ENCODE measurements at regions of chr1 and their contacts with region 1.

Region 1: DNA sequence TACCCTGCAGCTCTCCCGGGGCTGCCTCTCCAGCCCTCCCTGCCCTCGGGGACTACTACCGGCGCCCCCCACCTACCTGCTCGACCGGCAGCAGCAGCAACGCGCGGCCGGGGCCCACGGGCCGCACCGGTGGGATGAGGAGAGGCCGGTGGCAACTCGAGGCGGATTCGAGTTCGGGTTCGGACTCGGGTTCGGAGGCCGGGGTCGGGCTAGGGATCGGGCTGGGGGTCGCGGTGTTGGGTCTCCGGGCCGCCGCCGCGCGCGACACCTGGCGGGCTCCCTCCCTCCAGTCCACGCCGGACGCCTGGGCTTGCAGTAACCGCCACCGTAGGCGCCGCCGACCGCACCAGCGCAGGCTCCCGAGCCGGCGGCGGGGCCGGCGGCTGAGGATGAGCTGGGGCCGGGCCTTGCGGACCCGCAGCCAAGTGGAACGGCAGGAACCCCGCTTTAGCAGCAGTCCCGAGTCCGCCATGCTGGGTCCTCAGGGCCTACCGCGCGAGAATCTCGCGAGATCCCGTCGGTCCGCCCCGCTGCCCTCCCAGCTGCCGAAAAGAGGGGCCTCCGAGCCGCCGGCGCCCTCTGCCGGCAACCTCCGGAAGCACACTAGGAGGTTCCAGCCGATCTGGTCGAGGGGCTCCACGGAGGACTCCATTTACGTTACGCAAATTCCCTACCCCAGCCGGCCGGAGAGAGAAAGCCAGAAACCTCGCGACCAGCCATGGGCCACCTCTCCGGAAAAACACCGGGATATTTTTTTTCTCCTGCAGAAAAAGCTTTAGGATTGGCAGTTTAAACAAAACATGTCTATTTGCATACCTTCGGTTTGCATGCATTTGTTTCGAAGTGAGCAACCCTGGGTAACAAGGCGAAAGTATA is at the start of gene NOL9:
- DNase-seq: peak; percentile 99
- H3K4me3 Mint-ChIP-seq: peak within 1 kb of the TSS; percentile 85
- H3K27ac Mint-ChIP-seq: peak within 1 kb of the TSS; percentile 75
- H3K4me1 Mint-ChIP-seq: peaks cover 16% of the 10 kb centered on the region
- H3K27me3 Mint-ChIP-seq: no peaks in the 10 kb centered on the region
- total RNA-seq, gene NOL9: 54.7 and 59.2 TPM in 2 replicates

Region 2: DNA sequence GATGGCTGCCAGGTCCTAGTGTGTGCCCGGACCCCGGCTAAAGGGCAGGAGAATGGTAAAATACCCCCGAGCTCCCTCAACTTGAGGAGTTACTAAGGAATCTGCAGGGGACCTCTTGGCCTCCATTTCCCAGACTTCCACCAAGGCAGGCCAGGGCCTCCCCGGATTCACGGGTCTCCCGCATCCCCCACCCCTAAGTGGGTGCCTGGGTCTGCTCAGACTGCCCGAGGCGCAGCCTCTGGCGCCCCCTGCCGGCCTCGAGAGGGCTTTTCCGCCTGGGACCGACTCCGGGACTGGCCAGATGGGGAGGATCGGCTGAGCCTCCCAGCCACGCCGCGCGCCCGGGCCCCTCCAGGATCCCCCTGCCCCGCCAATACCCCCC is 64.5 kb before region 1 on chr1:
- intact Hi-C with region 1: loop called (anchors 5 kb)
- DNase-seq: peak; percentile 95
- H3K4me3 Mint-ChIP-seq: peak overlapping the region; percentile 81
- H3K27ac Mint-ChIP-seq: peak overlapping the region; percentile 83
- H3K4me1 Mint-ChIP-seq: peaks cover 20% of the 10 kb centered on the region
- H3K27me3 Mint-ChIP-seq: peaks cover 13% of the 10 kb centered on the region

Region 3: GRCh38 chr1:6579374-6580118 is 25.3 kb after region 1 on chr1 and contains the start of gene ZBTB48:
- intact Hi-C with region 1: loop called (anchors 1 kb)
- DNase-seq: peak; percentile 99
- H3K4me3 Mint-ChIP-seq: peak within 1 kb of the TSS; percentile 96
- H3K27ac Mint-ChIP-seq: peak within 1 kb of the TSS; percentile 93
- H3K4me1 Mint-ChIP-seq: peaks cover 24% of the 10 kb centered on the region
- H3K27me3 Mint-ChIP-seq: no peaks in the 10 kb centered on the region
- total RNA-seq, gene ZBTB48: 32.9 and 37.8 TPM in 2 replicates

Region 4: DNA sequence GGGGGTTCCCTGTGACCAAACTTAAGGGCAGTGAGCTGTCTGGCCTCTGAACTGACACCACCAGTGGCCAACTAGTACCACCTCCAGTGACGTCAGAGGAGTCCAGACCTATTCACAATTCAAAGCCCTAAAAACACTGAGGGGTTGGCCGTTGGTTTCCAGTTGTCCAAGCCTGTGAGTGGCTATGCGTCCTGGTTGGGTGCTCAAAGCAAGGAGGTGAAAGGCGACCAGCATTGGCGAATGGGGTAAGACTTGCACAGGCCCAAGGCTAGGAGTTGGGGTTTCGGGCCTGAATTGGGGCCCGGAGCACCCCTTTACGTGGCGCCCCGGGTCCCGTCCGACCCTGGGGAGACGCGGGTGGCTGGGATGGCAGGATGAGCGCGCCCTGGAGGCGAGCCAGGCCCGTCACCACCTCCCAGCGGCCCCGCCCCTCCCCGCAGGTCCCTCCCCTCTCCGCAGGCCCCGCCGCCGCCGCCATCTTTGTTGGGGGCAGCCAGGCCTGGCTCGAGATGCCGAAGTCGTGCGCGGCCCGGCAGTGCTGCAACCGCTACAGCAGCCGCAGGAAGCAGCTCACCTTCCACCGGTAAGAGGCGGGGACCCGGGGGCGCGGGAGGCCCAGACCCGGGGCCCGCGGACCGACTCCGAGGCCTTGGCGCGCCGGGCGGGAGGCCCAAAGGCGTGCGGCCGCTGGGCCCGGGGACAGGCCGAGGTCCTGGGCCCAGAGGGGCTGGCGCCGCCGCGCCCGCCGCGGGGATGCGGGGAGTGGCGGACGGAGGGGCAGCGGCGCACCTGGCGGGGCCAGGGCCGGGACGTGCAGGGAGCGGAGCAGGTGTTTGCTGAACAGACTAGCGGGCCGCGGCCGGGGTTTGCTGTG is 70.7 kb after region 1 on chr1 and contains the start of gene THAP3:
- intact Hi-C with region 1: loop called (anchors 1 kb)
- DNase-seq: peak; percentile 95
- H3K4me3 Mint-ChIP-seq: peak within 1 kb of the TSS; percentile 95
- H3K27ac Mint-ChIP-seq: peak within 1 kb of the TSS; percentile 90
- H3K4me1 Mint-ChIP-seq: peaks cover 28% of the 10 kb centered on the region
- H3K27me3 Mint-ChIP-seq: no peaks in the 10 kb centered on the region
- total RNA-seq, gene THAP3: 19.5 and 24.6 TPM in 2 replicates

Region 5: DNA sequence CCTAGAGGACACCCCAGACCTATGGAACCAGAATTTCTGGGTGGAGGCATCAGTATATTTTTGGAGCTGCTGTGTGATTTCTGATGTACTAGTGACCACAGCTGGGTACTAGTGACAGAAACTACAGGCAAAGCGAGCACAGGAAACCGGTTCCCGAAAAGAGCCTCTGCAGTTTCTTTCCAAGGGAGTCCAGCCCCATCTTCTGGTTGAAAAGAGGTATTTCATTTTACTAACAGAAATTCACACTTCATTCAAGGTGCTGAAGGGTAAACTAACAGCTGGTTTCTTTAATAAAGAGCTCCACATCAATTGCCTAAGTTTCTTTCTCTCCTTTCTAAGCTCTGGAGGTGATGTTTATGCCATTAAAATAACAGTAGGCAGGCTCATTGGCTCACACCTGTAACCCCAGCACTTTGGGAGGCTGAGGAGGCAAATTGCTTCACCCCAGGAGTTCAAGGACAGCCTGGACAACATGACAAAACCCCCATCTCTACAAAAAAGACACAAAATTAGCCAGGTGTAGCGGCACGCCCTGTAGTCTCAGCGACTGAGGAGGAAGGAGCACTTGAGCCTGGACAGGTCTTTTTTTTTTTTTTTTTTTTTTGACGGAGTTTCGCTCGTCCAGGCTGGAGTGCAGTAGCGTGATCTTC is 92.4 kb after region 1 on chr1:
- intact Hi-C with region 1: loop called (anchors 1 kb)
- DNase-seq: peak; percentile 78
- H3K4me3 Mint-ChIP-seq: no peak overlapping the region
- H3K27ac Mint-ChIP-seq: no peak overlapping the region
- H3K4me1 Mint-ChIP-seq: peaks cover 2% of the 10 kb centered on the region
- H3K27me3 Mint-ChIP-seq: no peaks in the 10 kb centered on the region

Region 6: GRCh38 chr1:6701437-6702153 is 147.3 kb after region 1 on chr1 and contains the start of gene DNAJC11:
- intact Hi-C with region 1: loop called (anchors 1 kb)
- DNase-seq: peak; percentile 99
- H3K4me3 Mint-ChIP-seq: peak within 1 kb of the TSS; percentile 91
- H3K27ac Mint-ChIP-seq: peak within 1 kb of the TSS; percentile 96
- H3K4me1 Mint-ChIP-seq: peaks cover 25% of the 10 kb centered on the region
- H3K27me3 Mint-ChIP-seq: no peaks in the 10 kb centered on the region
- total RNA-seq, gene DNAJC11: 87.6 and 92.5 TPM in 2 replicates